ENCODE measurements at regions of chr2 and their contacts with region 1.

Region 1: GRCh38 chr2:28240937-28241336 is 151.7 kb upstream of the FOSL2 start:
- DNase-seq: no peak
- ATAC-seq: no peak
- H3K4me3 ChIP-seq: no peak overlapping the region
- H3K4me3 Mint-ChIP-seq: no peak overlapping the region
- H3K27ac ChIP-seq: no peak overlapping the region
- H3K27ac Mint-ChIP-seq: no peak overlapping the region
- H3K4me1 ChIP-seq: no peaks in the 10 kb centered on the region
- H3K4me1 Mint-ChIP-seq: peaks cover 0 to 8% (median 0%) of the 10 kb centered on the region in 3 donors
- H3K27me3 ChIP-seq: no peaks in the 10 kb centered on the region
- H3K27me3 Mint-ChIP-seq: no peaks in the 10 kb centered on the region

Region 2: DNA sequence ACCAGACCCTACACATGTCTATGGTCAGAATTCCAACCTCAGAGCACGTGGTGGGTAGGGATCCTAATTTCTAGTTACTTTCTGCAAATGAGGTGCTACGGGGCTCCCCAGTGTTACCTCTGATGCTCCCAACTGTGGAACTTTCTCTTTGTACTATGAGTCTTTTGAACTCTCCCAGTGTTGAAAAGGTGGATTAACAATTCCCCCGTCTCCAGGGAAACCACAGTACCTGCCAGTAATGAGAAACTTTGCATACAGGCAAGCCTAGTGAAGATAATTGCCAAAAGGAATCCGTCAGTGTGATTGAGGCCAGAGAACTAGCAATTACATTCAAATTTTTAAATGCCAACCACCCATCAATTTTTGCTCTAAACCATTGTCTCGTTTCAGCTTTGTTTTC is 22.8 kb after region 1 on chr2:
- CTCF ChIA-PET with region 1: no interaction called
- POLR2A ChIA-PET with region 1: interaction called in 1 of 2 experiments, 15 read pairs
- DNase-seq: no peak
- ATAC-seq: no peak
- H3K4me3 ChIP-seq: no peak overlapping the region
- H3K4me3 Mint-ChIP-seq: no peak overlapping the region
- H3K27ac ChIP-seq: no peak overlapping the region
- H3K27ac Mint-ChIP-seq: no peak overlapping the region
- H3K4me1 ChIP-seq: peaks cover 0 to 10% of the 10 kb centered on the region in 2 experiments
- H3K4me1 Mint-ChIP-seq: peaks cover 0 to 9% (median 7%) of the 10 kb centered on the region in 3 donors
- H3K27me3 ChIP-seq: no peaks in the 10 kb centered on the region
- H3K27me3 Mint-ChIP-seq: no peaks in the 10 kb centered on the region

Region 3: GRCh38 chr2:28300485-28301341 is 59.8 kb after region 1 on chr2:
- CTCF ChIA-PET with region 1: no interaction called
- POLR2A ChIA-PET with region 1: no interaction called
- DNase-seq: no peak
- ATAC-seq: no peak
- H3K4me3 ChIP-seq: no peak overlapping the region
- H3K4me3 Mint-ChIP-seq: no peak overlapping the region
- H3K27ac ChIP-seq: no peak overlapping the region
- H3K27ac Mint-ChIP-seq: peak overlapping the region in 1 of 2 donors; percentile 22
- H3K4me1 ChIP-seq: no peaks in the 10 kb centered on the region
- H3K4me1 Mint-ChIP-seq: no peaks in the 10 kb centered on the region
- H3K27me3 ChIP-seq: no peaks in the 10 kb centered on the region
- H3K27me3 Mint-ChIP-seq: no peaks in the 10 kb centered on the region

Region 4: DNA sequence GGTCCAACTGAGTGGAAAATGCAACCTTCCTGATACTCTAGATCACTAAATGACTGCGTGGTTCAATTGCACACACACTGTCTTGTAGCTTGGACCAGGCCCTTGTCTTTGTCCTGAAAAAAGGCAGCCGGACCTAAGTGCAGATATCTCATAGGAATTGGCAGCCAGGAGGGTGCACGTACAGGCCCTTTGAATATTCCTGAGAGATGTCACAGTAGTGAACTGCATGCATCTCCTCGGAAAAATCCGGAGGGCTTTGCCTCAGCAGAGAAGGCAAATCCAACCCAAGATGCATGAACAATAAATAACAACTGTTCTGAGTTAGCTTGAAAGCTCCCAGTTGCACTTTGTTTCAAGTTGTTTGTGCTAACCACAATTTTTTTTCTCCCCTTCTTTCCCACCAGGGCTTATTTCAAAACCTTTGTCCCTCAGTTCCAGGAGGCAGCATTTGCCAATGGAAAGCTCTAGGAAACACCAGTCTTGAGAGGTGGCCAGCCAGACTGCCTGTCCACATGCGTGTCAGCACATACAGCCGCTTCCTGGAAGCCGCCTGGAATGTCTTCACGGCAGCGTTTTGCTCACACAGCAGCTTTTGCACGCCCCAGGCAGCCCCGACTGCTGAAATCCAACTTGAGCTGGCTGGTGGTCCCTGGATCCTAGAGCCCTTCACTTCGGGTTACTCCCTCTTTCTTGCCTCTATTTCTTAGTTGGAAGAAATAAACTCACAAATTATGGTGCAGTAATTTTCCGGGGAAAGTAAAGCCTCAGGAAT is 97.3 kb after region 1 on chr2:
- CTCF ChIA-PET with region 1: no interaction called
- POLR2A ChIA-PET with region 1: no interaction called
- DNase-seq: no peak
- ATAC-seq: no peak
- H3K4me3 ChIP-seq: no peak overlapping the region
- H3K4me3 Mint-ChIP-seq: no peak overlapping the region
- H3K27ac ChIP-seq: no peak overlapping the region
- H3K27ac Mint-ChIP-seq: peak overlapping the region in 1 of 2 donors; percentile 53
- H3K4me1 ChIP-seq: no peaks in the 10 kb centered on the region
- H3K4me1 Mint-ChIP-seq: peaks cover 0 to 10% (median 0%) of the 10 kb centered on the region in 3 donors
- H3K27me3 ChIP-seq: no peaks in the 10 kb centered on the region
- H3K27me3 Mint-ChIP-seq: no peaks in the 10 kb centered on the region

Region 5: DNA sequence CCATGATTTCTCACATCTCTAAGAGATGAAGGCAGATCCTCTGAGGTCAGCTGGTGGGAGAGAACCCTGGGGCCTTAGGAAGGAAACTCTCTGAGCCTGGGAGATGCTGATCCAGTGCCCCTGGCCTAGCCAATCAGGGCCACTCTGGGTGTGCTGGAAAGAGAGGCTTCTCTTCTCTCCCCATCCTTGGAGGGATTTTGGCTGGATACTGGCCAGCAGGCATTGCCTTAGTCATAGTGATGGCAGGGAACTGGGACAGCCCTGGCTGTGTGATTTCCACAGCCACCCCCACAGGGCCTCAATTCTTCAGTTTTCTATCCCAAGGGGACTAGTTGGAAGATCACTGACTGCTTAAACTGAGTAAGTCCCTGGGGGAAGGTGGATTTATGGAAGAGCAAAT is 228.4 kb after region 1 on chr2:
- CTCF ChIA-PET with region 1: no interaction called
- POLR2A ChIA-PET with region 1: no interaction called
- DNase-seq: no peak
- ATAC-seq: no peak
- H3K4me3 ChIP-seq: no peak overlapping the region
- H3K4me3 Mint-ChIP-seq: peak overlapping the region in 1 of 3 donors; percentile 37
- H3K27ac ChIP-seq: no peak overlapping the region
- H3K27ac Mint-ChIP-seq: no peak overlapping the region
- H3K4me1 ChIP-seq: peaks cover 3 to 5% of the 10 kb centered on the region in 2 experiments
- H3K4me1 Mint-ChIP-seq: peaks cover 13 to 24% (median 24%) of the 10 kb centered on the region in 3 donors
- H3K27me3 ChIP-seq: peaks cover 0 to 2% of the 10 kb centered on the region in 2 experiments
- H3K27me3 Mint-ChIP-seq: no peaks in the 10 kb centered on the region